ENCODE measurements at regions of chr14 and their contacts with region 1.

Region 1: DNA sequence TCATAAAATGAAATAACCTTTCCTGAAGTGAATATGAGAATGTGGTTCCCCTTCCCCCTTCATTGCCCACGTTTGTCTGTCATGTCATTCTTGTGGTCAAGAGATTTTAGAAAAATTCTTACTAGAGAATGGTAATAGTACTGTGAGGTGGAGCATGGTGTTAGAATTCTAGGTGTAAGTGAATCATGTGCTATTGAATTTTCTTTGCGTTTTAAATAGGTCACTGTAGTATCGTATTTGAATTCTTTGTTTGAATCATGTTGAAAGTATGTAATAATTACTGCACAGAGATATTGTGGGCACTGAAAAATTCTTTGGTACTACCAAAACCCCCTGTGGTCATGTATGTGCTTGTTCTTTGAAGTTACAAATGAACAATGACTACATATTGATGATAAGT is 49.9 kb downstream of the FUT8 start:
- DNase-seq: peak; percentile 45
- H3K4me3 Mint-ChIP-seq: no peak overlapping the region
- H3K27ac Mint-ChIP-seq: peak overlapping the region; percentile 21
- H3K4me1 Mint-ChIP-seq: peaks cover 36% of the 10 kb centered on the region
- H3K27me3 Mint-ChIP-seq: no peaks in the 10 kb centered on the region

Region 2: DNA sequence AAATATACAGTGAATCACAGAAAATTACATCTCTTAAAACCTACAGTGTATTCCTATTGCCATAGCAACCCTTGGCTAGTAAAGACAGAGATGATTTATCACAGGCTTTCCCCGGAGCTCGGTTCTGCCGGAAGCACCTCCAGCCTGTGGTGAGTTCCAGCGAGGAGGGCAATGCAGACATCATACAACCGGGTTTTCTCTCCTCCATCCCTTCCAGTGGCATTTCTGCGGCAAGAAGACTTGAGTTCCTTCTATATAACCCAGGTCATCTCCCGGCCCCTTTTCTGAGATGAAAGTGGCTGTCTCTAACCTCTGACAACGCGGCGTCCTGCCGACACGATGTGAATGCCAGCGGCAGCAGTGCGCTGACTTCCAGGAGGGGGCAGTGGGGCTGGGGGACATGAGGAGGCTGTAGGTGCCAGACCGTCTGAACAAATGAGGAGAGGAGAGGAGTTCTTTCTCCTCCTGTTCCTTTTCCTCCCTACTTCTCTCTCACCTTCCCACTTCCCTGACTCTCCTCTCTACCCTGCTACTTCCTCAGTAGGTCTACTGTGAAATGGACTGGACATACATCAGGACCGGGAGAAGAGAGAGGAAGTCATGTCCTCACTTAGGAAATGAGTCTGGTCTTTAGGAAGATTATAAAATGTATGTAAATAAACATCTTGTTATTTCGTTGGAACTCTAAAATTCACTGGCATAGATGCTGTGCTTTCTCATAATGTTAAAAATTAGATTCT is 291.5 kb before region 1 on chr14:
- CTCF ChIA-PET with region 1: no interaction called
- POLR2A ChIA-PET with region 1: no interaction called
- intact Hi-C with region 1: loop called (anchors 5 kb)
- DNase-seq: peak; percentile 72
- H3K4me3 Mint-ChIP-seq: peak overlapping the region; percentile 68
- H3K27ac Mint-ChIP-seq: no peak overlapping the region
- H3K4me1 Mint-ChIP-seq: peaks cover 14% of the 10 kb centered on the region
- H3K27me3 Mint-ChIP-seq: peaks cover 6% of the 10 kb centered on the region

Region 3: DNA sequence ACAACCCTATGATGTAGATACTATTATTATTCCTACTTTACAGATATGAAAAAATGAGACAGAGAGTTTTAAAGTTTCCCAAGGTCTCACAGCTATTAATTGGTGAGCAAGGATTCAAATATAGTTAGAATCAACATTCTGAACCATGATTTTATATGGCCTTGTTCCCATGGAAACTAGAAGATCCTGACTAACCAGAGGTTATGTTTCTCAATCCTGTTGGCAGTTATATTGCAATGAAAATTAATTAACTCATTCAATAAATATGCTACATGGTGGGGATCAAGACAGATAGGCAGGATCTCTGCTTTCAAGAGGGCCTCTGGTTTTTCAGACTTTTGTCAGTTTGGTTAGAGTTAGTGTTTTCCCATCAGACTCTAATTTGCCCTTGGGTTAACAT is 59.2 kb before region 1 on chr14:
- CTCF ChIA-PET with region 1: no interaction called
- POLR2A ChIA-PET with region 1: no interaction called
- intact Hi-C with region 1: no loop called
- DNase-seq: no peak
- H3K4me3 Mint-ChIP-seq: no peak overlapping the region
- H3K27ac Mint-ChIP-seq: no peak overlapping the region
- H3K4me1 Mint-ChIP-seq: no peaks in the 10 kb centered on the region
- H3K27me3 Mint-ChIP-seq: no peaks in the 10 kb centered on the region

Region 4: DNA sequence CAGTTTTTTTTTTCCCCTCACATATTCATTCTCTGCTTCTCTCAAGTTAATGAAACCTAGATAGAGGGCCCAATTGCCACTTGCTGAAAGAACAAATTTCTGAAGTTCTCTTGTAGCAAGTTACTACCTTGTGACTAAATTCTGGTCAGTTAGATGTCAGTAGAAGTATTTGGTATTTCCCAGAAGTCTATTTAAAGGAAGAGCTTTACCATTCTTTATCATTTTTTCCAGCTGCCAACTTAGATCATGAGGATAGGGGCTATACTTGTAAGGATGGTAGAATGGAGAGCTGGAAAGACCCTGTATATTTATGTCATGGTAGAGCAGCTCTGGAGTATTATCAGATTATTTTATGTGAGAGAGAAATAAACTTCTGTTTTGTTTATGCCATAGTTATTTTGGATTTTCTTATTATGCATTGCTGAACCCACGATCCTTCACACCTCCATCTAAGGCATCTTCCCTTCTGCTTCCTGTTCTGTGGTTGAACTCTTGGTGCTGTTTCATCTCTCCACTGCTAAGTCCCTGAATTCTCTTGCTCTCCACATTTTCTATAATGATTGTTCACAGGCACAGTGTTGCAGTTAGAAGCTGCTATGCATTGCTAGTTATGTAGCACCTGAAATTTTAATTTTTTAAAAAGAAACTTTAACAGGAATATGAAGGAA is 24.0 kb before region 1 on chr14:
- CTCF ChIA-PET with region 1: interaction called, 4 read pairs
- POLR2A ChIA-PET with region 1: no interaction called
- intact Hi-C with region 1: loop called (anchors 1 kb)
- DNase-seq: no peak
- H3K4me3 Mint-ChIP-seq: no peak overlapping the region
- H3K27ac Mint-ChIP-seq: peak overlapping the region; percentile 76
- H3K4me1 Mint-ChIP-seq: peaks cover 32% of the 10 kb centered on the region
- H3K27me3 Mint-ChIP-seq: no peaks in the 10 kb centered on the region

Region 5: GRCh38 chr14:65444230-65444629 is 18.2 kb before region 1 on chr14:
- CTCF ChIA-PET with region 1: interaction called, 4 read pairs
- POLR2A ChIA-PET with region 1: no interaction called
- intact Hi-C with region 1: loop called (anchors 2 kb)
- DNase-seq: no peak
- H3K4me3 Mint-ChIP-seq: no peak overlapping the region
- H3K27ac Mint-ChIP-seq: no peak overlapping the region
- H3K4me1 Mint-ChIP-seq: peaks cover 28% of the 10 kb centered on the region
- H3K27me3 Mint-ChIP-seq: no peaks in the 10 kb centered on the region

Region 6: GRCh38 chr14:65478596-65478995 is 16.2 kb after region 1 on chr14:
- CTCF ChIA-PET with region 1: interaction called, 4 read pairs
- POLR2A ChIA-PET with region 1: interaction called, 4 read pairs
- intact Hi-C with region 1: loop called (anchors 1 kb)
- DNase-seq: no peak
- H3K4me3 Mint-ChIP-seq: no peak overlapping the region
- H3K27ac Mint-ChIP-seq: no peak overlapping the region
- H3K4me1 Mint-ChIP-seq: peaks cover 70% of the 10 kb centered on the region
- H3K27me3 Mint-ChIP-seq: no peaks in the 10 kb centered on the region

Measured in activated CD4-positive, alpha-beta memory T cell treated with anti-CD3 and anti-CD28 coated beads for 36 hours (primary cell).